ENCODE measurements at regions of chr6 and their contacts with region 1.

Region 1: DNA sequence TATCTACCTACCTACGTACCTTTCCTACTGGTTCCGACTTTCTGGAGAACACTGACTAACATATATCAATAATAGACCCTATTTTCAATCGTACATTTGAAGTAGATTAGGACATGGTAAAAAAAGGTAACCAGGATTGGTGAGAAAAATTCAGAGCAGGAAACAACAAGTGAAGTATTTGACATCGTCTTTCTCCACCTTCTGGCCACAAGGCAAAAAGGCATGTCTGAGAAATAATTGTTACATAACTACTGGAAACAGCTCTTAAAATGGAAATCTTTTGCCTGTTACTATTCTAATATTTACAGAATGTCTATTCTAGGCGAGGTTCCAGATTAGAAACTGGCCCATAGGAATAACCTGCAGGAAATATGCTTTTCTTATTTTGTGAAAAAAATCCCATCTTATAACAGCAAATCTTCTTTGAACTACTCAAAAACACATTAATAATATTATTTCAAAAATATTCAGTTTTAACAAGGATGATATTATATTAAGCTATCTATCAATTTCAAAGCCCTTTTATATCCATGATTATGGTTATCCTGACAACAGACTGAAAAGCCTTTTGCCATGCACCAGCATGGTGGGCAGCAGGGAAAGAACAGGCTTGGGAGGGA is 80.8 kb downstream of the RCAN2 start:
- DNase-seq: no peak
- ATAC-seq: peak; percentile 47
- H3K4me3 Mint-ChIP-seq: no peak overlapping the region
- H3K27ac Mint-ChIP-seq: no peak overlapping the region
- H3K4me1 Mint-ChIP-seq: no peaks in the 10 kb centered on the region
- H3K27me3 Mint-ChIP-seq: no peaks in the 10 kb centered on the region
- CTCF ChIP-seq: peak; percentile 44

Region 2: GRCh38 chr6:46042355-46042999 is 368.0 kb before region 1 on chr6:
- CTCF ChIA-PET with region 1: no interaction called
- POLR2A ChIA-PET with region 1: no interaction called
- intact Hi-C with region 1: loop called (anchors 1 kb)
- DNase-seq: no peak
- ATAC-seq: peak; percentile 40
- H3K4me3 Mint-ChIP-seq: no peak overlapping the region
- H3K27ac Mint-ChIP-seq: no peak overlapping the region
- H3K4me1 Mint-ChIP-seq: no peaks in the 10 kb centered on the region
- H3K27me3 Mint-ChIP-seq: no peaks in the 10 kb centered on the region
- CTCF ChIP-seq: no peak

Region 3: DNA sequence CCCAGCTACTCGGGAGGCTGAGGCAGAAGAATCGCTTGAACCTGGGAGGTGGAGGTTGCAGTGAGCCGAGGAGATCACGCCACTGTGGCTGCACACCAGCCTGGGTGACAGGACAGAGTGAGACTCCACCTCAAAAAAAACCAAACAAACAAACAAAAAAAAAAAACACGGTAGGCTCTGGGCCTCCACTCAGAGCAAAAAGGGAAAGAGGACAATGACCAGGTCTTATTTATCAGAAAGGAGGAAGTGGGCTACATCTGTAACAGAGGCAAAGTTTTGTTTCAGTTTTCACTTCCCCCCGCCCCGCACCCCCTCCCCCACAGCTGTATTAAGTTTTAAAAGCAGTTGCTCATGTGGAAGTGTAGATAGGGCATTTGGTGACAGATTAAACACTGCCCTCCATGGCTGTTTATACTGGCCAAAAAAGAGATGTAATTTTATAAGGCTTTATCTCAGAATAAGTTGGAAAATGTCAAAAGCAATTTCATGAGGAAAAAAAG is 33.8 kb before region 1 on chr6:
- CTCF ChIA-PET with region 1: interaction called, 12 read pairs
- POLR2A ChIA-PET with region 1: no interaction called
- intact Hi-C with region 1: loop called (anchors 1 kb)
- DNase-seq: peak; percentile 17
- ATAC-seq: peak; percentile 89
- H3K4me3 Mint-ChIP-seq: peak overlapping the region; percentile 69
- H3K27ac Mint-ChIP-seq: peak overlapping the region; percentile 86
- H3K4me1 Mint-ChIP-seq: peaks cover 77% of the 10 kb centered on the region
- H3K27me3 Mint-ChIP-seq: no peaks in the 10 kb centered on the region
- CTCF ChIP-seq: no peak

Region 4: GRCh38 chr6:46484081-46484820 is 73.8 kb after region 1 on chr6:
- CTCF ChIA-PET with region 1: no interaction called
- POLR2A ChIA-PET with region 1: no interaction called
- intact Hi-C with region 1: no loop called
- DNase-seq: no peak
- ATAC-seq: no peak
- H3K4me3 Mint-ChIP-seq: no peak overlapping the region
- H3K27ac Mint-ChIP-seq: no peak overlapping the region
- H3K4me1 Mint-ChIP-seq: no peaks in the 10 kb centered on the region
- H3K27me3 Mint-ChIP-seq: peaks cover 41% of the 10 kb centered on the region
- CTCF ChIP-seq: no peak

Region 5: GRCh38 chr6:46719099-46719498 is 308.7 kb after region 1 on chr6:
- CTCF ChIA-PET with region 1: no interaction called
- POLR2A ChIA-PET with region 1: no interaction called
- intact Hi-C with region 1: no loop called
- DNase-seq: no peak
- ATAC-seq: no peak
- H3K4me3 Mint-ChIP-seq: no peak overlapping the region
- H3K27ac Mint-ChIP-seq: no peak overlapping the region
- H3K4me1 Mint-ChIP-seq: no peaks in the 10 kb centered on the region
- H3K27me3 Mint-ChIP-seq: peaks cover 21% of the 10 kb centered on the region
- CTCF ChIP-seq: no peak

Region 6: DNA sequence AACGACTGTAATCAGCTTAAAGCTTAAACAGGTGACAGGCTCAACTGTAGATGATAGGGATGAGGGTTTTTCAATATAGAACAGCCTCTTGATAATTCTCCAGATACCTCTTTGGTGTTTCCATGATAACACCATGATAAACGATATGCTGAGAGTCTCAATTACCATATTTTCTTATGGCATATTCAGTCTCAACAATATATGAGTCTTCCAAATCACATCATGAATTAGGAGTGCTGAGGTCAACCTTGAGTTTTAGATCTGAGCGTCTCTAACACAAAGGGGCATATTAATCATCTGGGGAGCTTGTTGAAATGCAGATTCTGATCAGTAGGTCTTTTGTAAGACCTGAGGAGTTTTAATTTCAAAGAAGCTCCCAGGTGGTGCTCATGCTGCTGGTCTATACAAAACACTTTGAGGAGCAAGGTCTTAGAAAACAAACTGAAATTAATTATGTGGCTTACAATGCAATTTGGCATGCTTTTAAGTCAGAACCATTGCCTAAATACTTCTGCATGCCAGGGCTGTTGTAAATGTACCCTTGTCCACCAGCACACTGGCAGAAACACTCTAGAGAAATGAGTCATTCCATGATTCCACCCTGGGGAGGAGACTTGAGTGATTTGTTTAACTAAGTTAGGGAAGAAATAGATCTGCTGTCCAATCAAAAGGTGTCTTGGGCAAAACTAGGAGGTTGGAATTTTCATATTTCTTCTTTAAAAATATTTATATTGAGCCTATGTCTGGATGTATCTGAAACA is 1651.0 kb after region 1 on chr6:
- CTCF ChIA-PET with region 1: no interaction called
- POLR2A ChIA-PET with region 1: no interaction called
- intact Hi-C with region 1: no loop called
- DNase-seq: no peak
- ATAC-seq: no peak
- H3K4me3 Mint-ChIP-seq: no peak overlapping the region
- H3K27ac Mint-ChIP-seq: no peak overlapping the region
- H3K4me1 Mint-ChIP-seq: no peaks in the 10 kb centered on the region
- H3K27me3 Mint-ChIP-seq: no peaks in the 10 kb centered on the region
- CTCF ChIP-seq: no peak

Region 7: DNA sequence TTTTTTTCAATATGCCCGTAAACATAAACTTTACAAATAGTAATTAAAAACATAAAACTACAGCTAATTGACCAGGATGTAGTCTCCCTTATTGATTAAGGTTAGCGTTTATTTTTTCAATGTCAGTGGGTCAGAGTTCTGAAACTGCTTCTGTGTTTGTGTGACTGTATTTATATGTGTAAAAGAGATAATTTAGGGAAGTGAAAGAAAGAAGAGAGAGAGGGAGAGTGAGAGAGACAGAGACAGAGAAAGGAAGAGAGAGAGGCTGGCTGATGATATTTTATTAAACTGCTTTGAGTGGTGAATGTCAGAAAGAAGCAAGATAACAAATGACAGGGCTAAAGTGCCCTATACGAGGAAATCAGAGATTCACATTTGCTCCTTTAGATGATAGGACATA is 1966.7 kb after region 1 on chr6:
- CTCF ChIA-PET with region 1: no interaction called
- POLR2A ChIA-PET with region 1: no interaction called
- intact Hi-C with region 1: no loop called
- DNase-seq: no peak
- ATAC-seq: no peak
- H3K4me3 Mint-ChIP-seq: no peak overlapping the region
- H3K27ac Mint-ChIP-seq: no peak overlapping the region
- H3K4me1 Mint-ChIP-seq: no peaks in the 10 kb centered on the region
- H3K27me3 Mint-ChIP-seq: no peaks in the 10 kb centered on the region
- CTCF ChIP-seq: no peak